ENCODE measurements at regions of chr5 and their contacts with region 1.

Region 1: GRCh38 chr5:33440482-33441240 is at the start of gene TARS1:
- DNase-seq: peak; percentile 100
- H3K4me3 ChIP-seq: peak within 1 kb of the TSS; percentile 70 to 83 (median 78)
- H3K27ac ChIP-seq: peak within 1 kb of the TSS; percentile 91 to 98 (median 94)
- H3K4me1 ChIP-seq: peaks cover 28 to 62% (median 53%) of the 10 kb centered on the region in 4 donors
- H3K27me3 ChIP-seq: no peaks in the 10 kb centered on the region
- CTCF ChIP-seq: no peak
- EP300 ChIP-seq: no peak
- POLR2A ChIP-seq: peak; percentile 75
- total RNA-seq, gene TARS1: 76.7 to 98.4 (median 85.7) TPM

Region 2: GRCh38 chr5:33891788-33892619 is 451.3 kb after region 1 on chr5 and contains the start of gene ADAMTS12:
- intact Hi-C with region 1: loop called (anchors 2 kb)
- DNase-seq: no peak
- H3K4me3 ChIP-seq: peak within 1 kb of the TSS; percentile 57 to 66 (median 60)
- H3K27ac ChIP-seq: peak within 1 kb of the TSS; percentile 67 to 84 (median 79)
- H3K4me1 ChIP-seq: peaks cover 20 to 58% (median 54%) of the 10 kb centered on the region in 4 donors
- H3K27me3 ChIP-seq: no peaks in the 10 kb centered on the region
- CTCF ChIP-seq: no peak
- EP300 ChIP-seq: no peak
- POLR2A ChIP-seq: no peak
- total RNA-seq, gene ADAMTS12: 2.3 to 6.0 (median 4.2) TPM

Region 3: GRCh38 chr5:33969572-33970452 is 529.2 kb after region 1 on chr5:
- intact Hi-C with region 1: loop called (anchors 5 kb)
- DNase-seq: no peak
- H3K4me3 ChIP-seq: no peak overlapping the region
- H3K27ac ChIP-seq: no peak overlapping the region
- H3K4me1 ChIP-seq: peaks cover 0 to 5% (median 0%) of the 10 kb centered on the region in 4 donors
- H3K27me3 ChIP-seq: no peaks in the 10 kb centered on the region
- CTCF ChIP-seq: peak; percentile 51 to 71 (median 63)
- EP300 ChIP-seq: no peak
- POLR2A ChIP-seq: no peak